ENCODE measurements at regions of chr1 and their contacts with region 1.

Region 1: DNA sequence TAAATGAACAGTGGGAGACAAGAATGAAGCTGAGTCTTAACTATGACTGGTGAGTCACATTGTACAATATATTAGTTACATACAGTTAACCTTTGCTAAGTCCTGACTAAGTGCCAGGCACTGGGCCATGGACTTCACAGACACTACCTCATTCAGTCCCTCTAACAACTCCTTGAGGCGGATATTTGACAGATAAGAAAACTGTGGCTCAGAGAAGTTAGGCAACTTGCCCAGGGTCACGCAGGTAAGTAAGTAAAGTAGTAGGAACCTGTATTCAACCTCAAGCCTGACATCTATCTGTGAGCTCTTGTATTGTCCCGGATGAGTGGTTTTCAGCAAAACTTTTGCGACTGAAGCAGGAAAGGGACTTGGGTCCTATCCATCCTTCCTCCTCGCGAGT is 62.1 kb downstream of the GNG12 start:
- DNase-seq: no peak
- H3K4me3 ChIP-seq: no peak overlapping the region
- H3K27ac ChIP-seq: no peak overlapping the region
- H3K4me1 ChIP-seq: peaks cover 0 to 32% (median 7%) of the 10 kb centered on the region in 3 donors
- H3K27me3 ChIP-seq: no peaks in the 10 kb centered on the region
- CTCF ChIP-seq: peak in 2 of 6 experiments; percentile 43 to 60
- POLR2A ChIP-seq: no peak

Region 2: DNA sequence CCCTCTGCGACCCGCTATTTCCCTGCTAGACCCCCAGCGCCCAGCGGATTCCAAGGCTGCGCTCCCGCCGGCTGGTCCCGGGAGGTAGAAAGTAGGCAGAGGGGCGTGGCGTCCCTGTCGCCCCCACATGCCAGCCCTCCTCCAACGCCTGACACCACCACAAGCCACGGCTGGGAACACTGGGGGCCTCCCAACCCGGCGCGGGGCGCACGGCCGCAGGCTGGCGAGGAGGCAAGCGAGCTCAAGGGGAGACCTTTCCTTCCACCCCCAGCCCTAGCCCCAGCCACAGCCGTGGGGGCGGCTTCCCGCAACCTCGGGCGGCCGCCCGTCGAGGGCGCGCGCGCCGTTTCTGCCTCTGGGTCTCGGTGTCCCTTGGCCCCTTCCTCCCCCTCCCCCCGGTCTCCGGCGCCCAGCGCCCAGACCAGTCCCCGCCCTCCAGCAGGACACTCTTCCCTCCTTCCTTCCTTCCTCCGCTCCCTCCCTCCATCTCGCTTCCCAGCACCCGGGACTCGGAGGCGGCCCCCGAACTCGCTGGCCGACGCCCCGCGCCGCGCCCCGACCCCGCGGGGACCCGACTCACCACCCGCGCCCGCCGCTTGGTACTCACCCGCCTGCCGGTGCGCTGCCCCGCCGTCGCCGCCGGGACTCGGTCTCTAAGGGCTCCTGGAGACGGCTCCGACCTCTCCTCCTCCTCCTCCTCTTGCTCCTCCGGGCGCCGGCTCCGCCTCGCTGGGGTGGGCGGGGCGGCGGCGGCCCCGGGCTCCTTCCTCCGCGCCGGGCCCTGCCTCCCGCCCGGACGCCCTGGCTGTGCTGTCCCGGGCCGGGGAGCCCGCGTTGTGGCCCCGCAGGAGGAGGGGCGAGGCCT is 61.8 kb after region 1 on chr1 and contains the start of gene GNG12:
- intact Hi-C with region 1: loop called (anchors 10 kb)
- DNase-seq: no peak
- H3K4me3 ChIP-seq: peak within 1 kb of the TSS; percentile 77 to 97 (median 82)
- H3K27ac ChIP-seq: peak within 1 kb of the TSS; percentile 92 to 97 (median 96)
- H3K4me1 ChIP-seq: peaks cover 4 to 80% (median 35%) of the 10 kb centered on the region in 3 donors
- H3K27me3 ChIP-seq: peaks cover 0 to 15% (median 0%) of the 10 kb centered on the region in 4 donors
- CTCF ChIP-seq: peak in 1 of 6 experiments; percentile 6
- POLR2A ChIP-seq: peak in 2 of 4 donors; percentile 68 to 73
- total RNA-seq, gene GNG12: 65.4 to 104 (median 89.9) TPM

Measured in esophagus squamous epithelium (tissue), 5 donors.